ENCODE measurements at regions of chr6 and their contacts with region 1.

Region 1: DNA sequence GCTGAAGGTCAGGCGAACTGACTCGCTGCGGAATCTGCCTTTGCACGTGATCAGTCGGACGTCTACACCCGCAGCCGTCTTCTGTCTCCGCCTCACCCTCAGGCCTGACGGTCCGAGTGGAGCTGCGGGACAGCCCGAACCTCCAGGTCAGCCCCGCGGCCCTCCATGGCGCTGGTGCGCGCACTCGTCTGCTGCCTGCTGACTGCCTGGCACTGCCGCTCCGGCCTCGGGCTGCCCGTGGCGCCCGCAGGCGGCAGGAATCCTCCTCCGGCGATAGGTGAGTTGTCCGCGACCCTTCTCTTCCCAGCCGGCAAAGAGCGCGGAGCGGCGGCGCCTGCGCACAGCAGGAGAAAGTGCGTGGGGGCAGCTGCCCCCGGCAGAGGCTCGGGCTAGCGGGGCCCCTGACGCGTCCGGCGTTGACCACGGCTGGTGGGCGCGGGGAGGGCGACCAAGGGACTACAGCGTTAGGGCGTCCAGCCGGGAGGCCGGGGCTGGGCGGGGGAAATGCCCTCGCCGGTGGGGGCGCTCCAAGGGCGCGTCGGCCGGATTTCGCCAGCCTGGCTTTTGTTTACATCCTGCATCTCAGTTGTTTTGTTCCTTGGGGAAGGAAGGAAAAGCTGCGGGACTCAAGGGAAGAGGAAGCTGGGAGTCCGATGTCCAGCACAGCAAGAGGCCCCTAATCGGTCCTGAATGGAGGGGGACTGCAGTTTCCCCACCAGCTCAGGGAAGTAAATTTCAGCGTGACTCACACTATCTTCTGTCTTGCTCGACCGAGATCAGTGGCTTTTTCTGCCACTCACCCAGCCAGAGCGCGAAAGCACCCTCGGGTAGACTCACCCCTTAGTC is at the start of gene SMPDL3A:
- DNase-seq: peak; percentile 74
- H3K4me3 ChIP-seq: peak within 1 kb of the TSS; percentile 61 to 71 (median 68)
- H3K27ac ChIP-seq: peak within 1 kb of the TSS; percentile 63
- H3K4me1 ChIP-seq: peaks cover 19% of the 10 kb centered on the region
- H3K27me3 ChIP-seq: no peaks in the 10 kb centered on the region
- CTCF ChIP-seq: peak; percentile 10 to 49
- total RNA-seq, gene SMPDL3A: 4.5 to 7.3 TPM

Region 2: DNA sequence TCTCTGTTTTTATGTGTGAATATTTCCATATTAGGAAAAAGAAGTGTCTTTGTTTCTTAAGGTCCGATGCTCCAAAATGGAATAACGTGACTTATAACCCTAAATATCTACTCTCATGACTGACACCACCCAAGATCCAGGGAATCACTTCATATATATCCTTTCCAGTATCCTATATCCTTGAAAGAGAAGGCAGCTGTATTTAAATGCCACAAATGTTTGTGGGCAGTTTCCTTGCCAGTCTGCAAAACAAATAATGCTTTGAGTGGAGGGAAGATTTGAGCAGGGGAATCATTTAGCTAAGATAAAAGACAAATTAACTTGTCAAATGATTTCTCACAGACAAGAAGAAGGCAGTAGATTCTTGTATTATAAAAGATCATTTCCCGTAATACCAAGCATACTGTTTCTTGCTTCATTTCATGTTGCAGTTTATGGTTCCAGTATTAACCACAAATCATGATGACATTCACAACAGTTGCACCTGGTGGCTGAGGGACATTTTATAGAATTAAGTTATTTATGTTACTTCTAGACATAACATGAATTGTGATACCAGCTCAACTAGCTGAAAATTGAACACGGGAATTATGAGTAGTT is 39.9 kb before region 1 on chr6:
- CTCF ChIA-PET with region 1: no interaction called
- dilution Hi-C with region 1: no loop called
- in situ Hi-C with region 1: no loop called
- intact Hi-C with region 1: loop called (anchors 1 kb)
- DNase-seq: no peak
- H3K4me3 ChIP-seq: no peak overlapping the region
- H3K27ac ChIP-seq: no peak overlapping the region
- H3K4me1 ChIP-seq: no peaks in the 10 kb centered on the region
- H3K27me3 ChIP-seq: no peaks in the 10 kb centered on the region
- CTCF ChIP-seq: no peak

Region 3: DNA sequence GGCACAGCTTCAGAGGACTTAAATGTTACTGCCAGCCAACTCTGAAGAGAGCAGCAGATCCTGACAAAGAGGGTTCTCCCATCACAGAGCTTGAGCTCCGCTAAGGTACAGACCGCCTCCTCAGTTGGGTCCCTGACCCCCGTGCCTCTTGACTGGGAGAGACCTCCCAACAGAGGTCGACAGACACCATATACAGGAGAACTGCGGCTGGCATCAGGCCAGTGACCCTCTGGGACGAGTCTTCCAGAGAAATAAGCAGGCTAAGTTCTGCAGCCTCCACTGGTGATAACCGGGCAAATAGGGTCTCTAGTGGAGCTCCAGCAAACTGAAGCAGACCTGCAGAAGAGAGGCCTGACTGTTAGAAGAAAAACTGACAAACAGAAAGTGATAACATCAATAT is 393.6 kb after region 1 on chr6:
- CTCF ChIA-PET with region 1: no interaction called
- dilution Hi-C with region 1: no loop called
- in situ Hi-C with region 1: no loop called
- intact Hi-C with region 1: no loop called
- DNase-seq: no peak
- H3K4me3 ChIP-seq: no peak overlapping the region
- H3K27ac ChIP-seq: no peak overlapping the region
- H3K4me1 ChIP-seq: no peaks in the 10 kb centered on the region
- H3K27me3 ChIP-seq: no peaks in the 10 kb centered on the region
- CTCF ChIP-seq: no peak

Region 4: DNA sequence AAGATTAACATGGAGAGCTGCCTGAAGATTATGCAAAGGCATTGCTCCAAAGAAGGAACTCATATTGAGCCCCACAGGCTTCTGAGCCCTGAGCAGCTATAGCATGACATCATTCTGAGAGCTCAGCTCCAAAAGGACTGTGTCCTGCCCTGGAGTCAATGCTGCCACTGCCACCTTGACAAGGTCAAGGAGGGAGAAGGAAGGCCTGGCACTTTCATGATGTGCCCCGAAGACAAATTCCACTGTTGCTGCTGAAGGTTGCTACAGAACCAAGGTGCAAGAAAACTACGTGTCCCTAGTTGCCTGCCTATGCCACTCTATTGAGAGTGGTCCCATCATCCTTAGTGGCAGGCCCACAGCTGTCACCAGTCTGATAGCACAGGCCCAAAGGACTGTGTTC is 453.4 kb after region 1 on chr6:
- CTCF ChIA-PET with region 1: no interaction called
- dilution Hi-C with region 1: no loop called
- in situ Hi-C with region 1: no loop called
- intact Hi-C with region 1: no loop called
- DNase-seq: no peak
- H3K4me3 ChIP-seq: no peak overlapping the region
- H3K27ac ChIP-seq: no peak overlapping the region
- H3K4me1 ChIP-seq: no peaks in the 10 kb centered on the region
- H3K27me3 ChIP-seq: no peaks in the 10 kb centered on the region
- CTCF ChIP-seq: no peak